Mammary epithelial cell (primary cell): ENCODE measurements at regions of chr16 and their contacts with region 1.

Region 1: GRCh38 chr16:14300705-14301168 is 229.6 kb downstream of the MRTFB start:
- DNase-seq: peak; percentile 77
- H3K4me3 ChIP-seq: peak overlapping the region in 2 of 3 experiments; percentile 77 to 96
- H3K27ac ChIP-seq: no peak overlapping the region
- H3K4me1 ChIP-seq: peaks cover 7% of the 10 kb centered on the region
- H3K27me3 ChIP-seq: no peaks in the 10 kb centered on the region
- CTCF ChIP-seq: peak; percentile 64 to 83

Region 2: GRCh38 chr16:14449790-14450480 is 149.2 kb after region 1 on chr16:
- CTCF ChIA-PET with region 1: no interaction called
- dilution Hi-C with region 1: no loop called
- in situ Hi-C with region 1: no loop called
- intact Hi-C with region 1: loop called (anchors 2 kb)
- DNase-seq: no peak
- H3K4me3 ChIP-seq: no peak overlapping the region
- H3K27ac ChIP-seq: no peak overlapping the region
- H3K4me1 ChIP-seq: no peaks in the 10 kb centered on the region
- H3K27me3 ChIP-seq: no peaks in the 10 kb centered on the region
- CTCF ChIP-seq: no peak

Region 3: GRCh38 chr16:14501331-14502255 is 200.9 kb after region 1 on chr16:
- CTCF ChIA-PET with region 1: no interaction called
- dilution Hi-C with region 1: loop called (anchors 5 kb)
- in situ Hi-C with region 1: no loop called
- intact Hi-C with region 1: no loop called
- DNase-seq: peak; percentile 98
- H3K4me3 ChIP-seq: peak overlapping the region in 2 of 3 experiments; percentile 4 to 17
- H3K27ac ChIP-seq: peak overlapping the region; percentile 94
- H3K4me1 ChIP-seq: peaks cover 60% of the 10 kb centered on the region
- H3K27me3 ChIP-seq: no peaks in the 10 kb centered on the region
- CTCF ChIP-seq: no peak

Region 4: DNA sequence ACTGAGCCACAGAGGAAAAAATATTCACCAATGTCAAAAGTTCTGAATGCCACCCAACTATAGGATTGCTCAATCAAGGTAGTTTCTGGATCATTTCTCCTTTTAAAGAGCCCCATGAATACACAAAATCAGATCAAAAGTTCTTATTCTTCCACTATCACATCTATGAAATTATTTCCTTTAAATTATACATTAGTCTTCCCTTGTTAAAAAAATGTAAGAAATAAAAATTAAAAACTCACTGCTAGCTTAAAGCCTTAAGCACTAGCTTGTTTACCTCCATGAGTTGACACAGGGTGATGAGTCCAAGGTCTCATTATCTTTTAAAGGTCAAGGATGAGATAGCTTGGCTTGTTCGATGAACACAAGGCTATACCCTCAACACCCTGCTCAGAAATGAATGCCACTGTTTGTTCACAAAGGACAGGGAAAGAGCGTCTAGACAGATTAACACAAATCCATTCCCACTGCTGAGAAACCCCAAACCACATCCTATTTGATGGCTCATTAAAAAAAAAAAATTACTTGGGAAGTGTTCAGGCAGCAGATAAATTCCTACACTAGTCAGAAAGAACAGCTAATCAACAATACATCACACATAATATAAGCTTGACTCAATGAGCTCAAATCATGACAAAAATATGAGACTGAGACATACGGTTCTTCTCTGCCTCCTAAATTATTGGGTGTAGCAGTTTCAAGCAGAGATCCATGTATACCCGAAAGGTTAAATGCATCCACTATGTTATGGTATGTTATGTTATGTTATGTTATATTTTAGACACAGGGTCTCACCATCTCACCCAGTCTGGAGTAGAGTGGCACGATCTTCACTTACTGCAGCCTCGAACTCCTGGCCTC is 210.4 kb after region 1 on chr16:
- CTCF ChIA-PET with region 1: no interaction called
- dilution Hi-C with region 1: no loop called
- in situ Hi-C with region 1: no loop called
- intact Hi-C with region 1: loop called (anchors 5 kb)
- DNase-seq: peak; percentile 95
- H3K4me3 ChIP-seq: no peak overlapping the region
- H3K27ac ChIP-seq: peak overlapping the region; percentile 86
- H3K4me1 ChIP-seq: peaks cover 31% of the 10 kb centered on the region
- H3K27me3 ChIP-seq: no peaks in the 10 kb centered on the region
- CTCF ChIP-seq: no peak

Region 5: GRCh38 chr16:14600164-14600563 is 299.4 kb after region 1 on chr16:
- CTCF ChIA-PET with region 1: no interaction called
- dilution Hi-C with region 1: no loop called
- in situ Hi-C with region 1: no loop called
- intact Hi-C with region 1: loop called (anchors 1 kb)
- DNase-seq: no peak
- H3K4me3 ChIP-seq: no peak overlapping the region
- H3K27ac ChIP-seq: no peak overlapping the region
- H3K4me1 ChIP-seq: no peaks in the 10 kb centered on the region
- H3K27me3 ChIP-seq: no peaks in the 10 kb centered on the region
- CTCF ChIP-seq: peak; percentile 45 to 48

Region 6: DNA sequence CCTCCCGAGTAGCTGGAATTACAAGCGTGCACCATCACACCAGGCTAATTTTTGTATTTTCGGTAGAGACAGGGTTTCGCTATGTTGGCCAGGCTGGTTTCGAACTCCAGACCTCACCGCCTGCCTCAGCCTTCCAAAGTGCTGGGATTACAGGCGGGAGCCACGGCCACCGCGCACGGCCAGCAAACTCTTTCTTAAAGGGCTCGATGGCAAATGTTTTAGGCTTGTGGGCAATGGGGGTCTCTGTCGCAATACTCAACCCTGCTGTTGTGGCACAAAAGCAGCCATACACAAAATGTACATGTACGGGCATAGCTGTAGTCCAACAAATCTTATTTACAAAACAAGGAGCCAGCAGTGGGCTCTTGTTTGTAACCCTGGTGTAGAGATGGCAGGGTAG is 310.9 kb after region 1 on chr16:
- CTCF ChIA-PET with region 1: no interaction called
- dilution Hi-C with region 1: no loop called
- in situ Hi-C with region 1: no loop called
- intact Hi-C with region 1: no loop called
- DNase-seq: no peak
- H3K4me3 ChIP-seq: no peak overlapping the region
- H3K27ac ChIP-seq: no peak overlapping the region
- H3K4me1 ChIP-seq: no peaks in the 10 kb centered on the region
- H3K27me3 ChIP-seq: no peaks in the 10 kb centered on the region
- CTCF ChIP-seq: no peak